ENCODE measurements at regions of chr1 and their contacts with region 1.

Region 1: DNA sequence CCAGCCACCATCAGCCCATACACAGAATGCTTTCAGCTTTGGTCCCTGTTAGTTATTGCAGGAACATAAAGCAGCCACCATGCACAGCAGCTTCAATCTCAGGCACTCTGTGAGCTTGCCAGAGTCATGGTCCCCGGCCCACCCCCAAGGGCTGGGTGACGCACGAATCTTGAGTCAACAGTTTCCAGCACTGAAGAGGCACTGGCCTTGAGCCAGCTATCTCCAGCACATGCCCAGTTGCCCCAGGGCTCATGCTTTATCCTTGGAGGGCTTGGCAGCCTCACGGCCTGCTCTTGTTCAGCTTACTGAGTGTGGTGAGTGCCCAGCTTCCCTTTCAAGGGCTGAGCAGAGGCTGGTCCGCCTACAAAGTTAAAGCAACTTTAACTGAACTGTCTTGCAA is 200.7 kb upstream of the RAB4A start:
- DNase-seq: peak; percentile 12
- H3K4me3 ChIP-seq: no peak overlapping the region
- CTCF ChIP-seq: no peak

Region 2: GRCh38 chr1:228978481-228979324 is 91.5 kb before region 1 on chr1:
- in situ Hi-C with region 1: loop called (anchors 5 kb)
- DNase-seq: no peak
- H3K4me3 ChIP-seq: no peak overlapping the region
- CTCF ChIP-seq: no peak

Region 3: DNA sequence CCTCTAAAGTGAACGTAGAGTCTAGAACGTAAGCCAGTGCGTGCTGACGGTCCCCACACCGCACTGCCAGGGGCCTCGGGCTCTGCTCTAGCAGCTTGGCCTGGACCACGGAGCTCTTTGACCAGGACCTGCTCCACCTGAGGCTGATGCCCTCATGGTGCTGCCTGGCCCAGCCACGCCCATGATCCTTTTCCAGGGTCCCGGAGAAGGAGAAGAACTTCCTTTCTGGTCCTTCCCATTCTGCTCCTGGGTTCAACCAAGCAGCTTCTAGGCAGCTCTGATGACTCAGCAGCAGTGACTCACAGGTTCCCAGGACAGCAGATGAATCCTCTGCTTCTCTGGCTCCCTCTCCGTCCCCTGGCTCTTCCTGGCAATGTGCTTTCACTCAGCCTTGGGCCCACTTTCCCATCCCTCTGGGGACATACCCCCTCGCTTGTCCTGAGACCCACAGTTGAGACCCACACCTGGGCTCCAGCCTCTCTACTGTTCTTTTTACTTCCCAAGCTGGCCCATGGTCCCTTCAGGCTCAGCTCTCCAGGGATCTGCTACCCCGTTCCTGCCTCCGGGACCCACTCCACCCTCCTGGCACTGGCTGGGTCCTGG is 45.5 kb before region 1 on chr1:
- in situ Hi-C with region 1: loop called (anchors 5 kb)
- DNase-seq: peak; percentile 37
- H3K4me3 ChIP-seq: no peak overlapping the region
- CTCF ChIP-seq: no peak

Region 4: GRCh38 chr1:229114921-229115365 is 44.8 kb after region 1 on chr1:
- in situ Hi-C with region 1: loop called (anchors 5 kb)
- DNase-seq: no peak
- H3K4me3 ChIP-seq: no peak overlapping the region
- CTCF ChIP-seq: no peak